ENCODE measurements at regions of chr5 and their contacts with region 1.

Region 1: GRCh38 chr5:133754575-133755169 is 142.3 kb upstream of the FSTL4 start:
- DNase-seq: peak in 1 of 5 donors; percentile 13
- ATAC-seq: peak in 3 of 4 donors; percentile 60 to 69 (median 62)
- H3K4me3 ChIP-seq: no peak overlapping the region
- H3K27ac ChIP-seq: no peak overlapping the region
- H3K4me1 ChIP-seq: no peaks in the 10 kb centered on the region
- H3K27me3 ChIP-seq: peaks cover 0 to 30% (median 6%) of the 10 kb centered on the region in 9 donors
- CTCF ChIP-seq: peak; percentile 30 to 64 (median 49)
- POLR2A ChIP-seq: no peak

Region 2: DNA sequence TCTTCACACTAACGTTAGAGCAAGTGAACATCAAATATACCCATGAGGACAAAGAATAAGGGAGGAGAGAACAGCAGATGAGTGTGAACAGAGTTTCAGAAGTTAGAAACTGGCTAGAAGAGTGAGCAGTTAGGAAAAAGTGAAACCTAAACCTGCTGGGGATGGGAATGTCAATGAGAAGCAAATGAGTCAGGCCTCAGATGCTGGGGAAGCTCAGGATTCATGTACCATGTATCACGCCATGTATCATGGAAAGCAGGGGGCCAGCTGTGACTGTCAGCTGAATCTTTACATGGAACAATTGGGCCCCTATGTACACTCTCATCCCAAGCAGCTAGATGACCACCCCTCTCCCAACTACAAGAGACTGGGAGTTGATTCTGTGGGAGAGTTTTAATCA is 904.6 kb before region 1 on chr5:
- intact Hi-C with region 1: no loop called
- DNase-seq: no peak
- ATAC-seq: no peak
- H3K4me3 ChIP-seq: no peak overlapping the region
- H3K27ac ChIP-seq: no peak overlapping the region
- H3K4me1 ChIP-seq: peaks cover 0 to 13% (median 0%) of the 10 kb centered on the region in 12 donors
- H3K27me3 ChIP-seq: no peaks in the 10 kb centered on the region
- CTCF ChIP-seq: no peak
- POLR2A ChIP-seq: no peak

Region 3: DNA sequence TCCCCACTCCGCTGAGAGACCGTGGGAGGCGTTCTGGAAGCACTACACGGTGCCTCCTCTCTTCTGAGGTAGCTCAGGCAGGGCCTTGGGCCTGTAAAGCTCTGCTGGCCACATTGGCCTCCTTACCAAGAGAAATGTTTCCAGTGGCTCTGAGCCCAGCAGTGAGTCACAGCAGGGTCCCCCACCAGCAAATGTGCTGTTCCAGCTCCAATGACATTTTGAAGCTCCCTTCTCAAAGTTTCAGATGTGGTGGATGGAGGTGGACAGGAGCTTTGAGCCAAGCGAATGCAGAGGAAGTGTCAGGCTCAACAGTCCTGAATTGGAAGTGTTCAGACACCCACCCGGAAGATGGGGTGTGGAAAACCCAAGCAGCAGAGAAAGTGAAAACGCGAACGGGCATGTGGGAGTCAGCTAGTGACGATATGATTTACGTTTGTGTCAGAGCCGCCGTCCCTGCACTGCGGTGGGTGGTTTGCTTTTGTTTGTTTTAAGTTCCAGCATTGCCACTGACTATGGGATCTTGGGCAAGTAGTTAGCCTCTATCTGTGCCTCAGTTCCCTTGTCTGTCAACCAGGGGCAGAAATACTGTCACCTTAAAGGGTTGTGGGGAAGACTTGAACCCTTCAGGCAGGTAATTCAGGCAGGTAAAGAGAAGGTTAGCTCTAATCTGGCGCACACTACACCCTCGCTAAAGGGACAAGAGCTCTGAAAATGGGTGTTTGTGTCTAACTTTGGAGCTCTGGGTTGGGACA is 175.6 kb after region 1 on chr5:
- intact Hi-C with region 1: loop called in 1 of 10 experiments (anchors 10 kb)
- DNase-seq: peak in 1 of 5 donors; percentile 17
- ATAC-seq: peak in 2 of 4 donors; percentile 48 to 57
- H3K4me3 ChIP-seq: peak overlapping the region in 1 of 12 donors; percentile 10
- H3K27ac ChIP-seq: peak overlapping the region in 1 of 12 donors; percentile 58
- H3K4me1 ChIP-seq: peaks cover 0 to 34% (median 0%) of the 10 kb centered on the region in 12 donors
- H3K27me3 ChIP-seq: peaks cover 0 to 5% (median 0%) of the 10 kb centered on the region in 9 donors
- CTCF ChIP-seq: no peak
- POLR2A ChIP-seq: no peak

Region 4: DNA sequence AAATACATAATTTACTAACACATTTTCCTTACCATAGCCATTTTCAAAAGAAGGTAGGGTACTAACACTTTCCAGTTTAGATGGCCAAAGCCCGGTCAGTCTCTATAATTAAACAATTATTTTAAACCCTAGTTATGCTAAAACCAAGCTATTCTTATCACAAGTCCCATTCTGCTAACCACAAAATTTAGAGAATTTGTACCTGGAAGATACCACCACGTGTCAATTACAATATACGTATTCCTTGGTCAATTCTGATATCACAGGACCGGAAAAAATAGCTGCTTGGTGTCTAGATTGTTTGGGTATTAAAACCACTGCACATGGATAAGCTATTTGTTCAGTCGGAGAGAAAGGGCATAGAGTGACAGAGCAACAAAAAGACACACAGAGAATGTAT is 441.0 kb after region 1 on chr5:
- intact Hi-C with region 1: no loop called
- DNase-seq: no peak
- ATAC-seq: no peak
- H3K4me3 ChIP-seq: no peak overlapping the region
- H3K27ac ChIP-seq: peak overlapping the region in 9 of 12 donors; percentile 10 to 63 (median 50)
- H3K4me1 ChIP-seq: peaks cover 0 to 12% (median 0%) of the 10 kb centered on the region in 12 donors
- H3K27me3 ChIP-seq: no peaks in the 10 kb centered on the region
- CTCF ChIP-seq: no peak
- POLR2A ChIP-seq: no peak

Measured in heart left ventricle (tissue), 16 donors.